Activated CD4-positive, alpha-beta memory T cell treated with anti-CD3 and anti-CD28 coated beads, Interleukin-2, amount 10 ng/mL, durations not matched to agents 7 days and 5 days (primary cell): ENCODE measurements at regions of chr1 and their contacts with region 1.

Region 1: DNA sequence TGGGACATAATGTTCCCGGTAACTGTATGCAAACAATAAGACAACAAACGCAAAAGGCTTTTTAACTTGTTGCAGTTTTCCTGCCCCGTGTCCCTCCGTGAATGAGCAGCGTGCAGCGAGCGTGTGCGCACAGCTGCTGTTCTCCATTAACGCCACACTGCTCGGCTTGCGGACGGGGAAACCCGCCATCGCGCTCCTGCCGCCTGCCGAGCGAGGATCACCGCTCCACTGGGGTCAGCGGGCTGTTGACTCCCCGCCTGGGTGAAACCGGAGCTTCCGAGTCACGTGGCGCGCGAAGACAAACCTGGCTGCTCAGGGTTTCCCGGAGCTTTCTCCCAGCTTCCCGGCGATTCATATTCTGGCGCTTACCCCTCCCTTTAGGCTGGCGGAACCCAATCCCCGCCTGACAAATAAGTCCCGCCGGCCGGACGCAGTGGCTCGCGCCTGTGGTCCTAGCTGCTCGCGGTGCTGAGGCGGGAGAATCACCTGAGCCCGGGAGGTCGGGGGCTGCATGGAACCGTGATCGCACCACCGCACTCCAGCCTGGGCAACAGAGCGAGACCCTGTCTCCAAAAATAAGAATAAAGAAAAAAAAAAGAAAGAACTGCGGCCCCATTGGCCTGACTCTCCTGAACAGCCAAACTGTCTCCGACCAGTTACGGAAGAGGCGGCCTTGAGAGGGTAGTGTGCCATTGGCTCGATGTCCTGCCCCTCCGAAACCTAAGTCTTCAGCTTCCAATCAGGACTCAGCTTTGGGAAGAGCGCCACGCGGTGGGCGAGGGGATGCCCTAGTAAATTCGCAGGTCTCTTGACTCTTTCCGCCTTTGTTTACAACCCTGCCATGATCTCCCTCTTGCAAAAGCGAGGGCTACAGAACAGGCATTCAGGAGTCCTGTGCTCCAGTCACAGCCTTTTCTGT is at the start of gene CREB3L4:
- DNase-seq: peak; percentile 87
- H3K4me3 Mint-ChIP-seq: peak within 1 kb of the TSS; percentile 80
- H3K27ac Mint-ChIP-seq: peak within 1 kb of the TSS; percentile 84
- H3K4me1 Mint-ChIP-seq: peaks cover 63% of the 10 kb centered on the region
- H3K27me3 Mint-ChIP-seq: no peaks in the 10 kb centered on the region
- total RNA-seq, gene CREB3L4: 7.0 to 8.4 TPM

Region 2: DNA sequence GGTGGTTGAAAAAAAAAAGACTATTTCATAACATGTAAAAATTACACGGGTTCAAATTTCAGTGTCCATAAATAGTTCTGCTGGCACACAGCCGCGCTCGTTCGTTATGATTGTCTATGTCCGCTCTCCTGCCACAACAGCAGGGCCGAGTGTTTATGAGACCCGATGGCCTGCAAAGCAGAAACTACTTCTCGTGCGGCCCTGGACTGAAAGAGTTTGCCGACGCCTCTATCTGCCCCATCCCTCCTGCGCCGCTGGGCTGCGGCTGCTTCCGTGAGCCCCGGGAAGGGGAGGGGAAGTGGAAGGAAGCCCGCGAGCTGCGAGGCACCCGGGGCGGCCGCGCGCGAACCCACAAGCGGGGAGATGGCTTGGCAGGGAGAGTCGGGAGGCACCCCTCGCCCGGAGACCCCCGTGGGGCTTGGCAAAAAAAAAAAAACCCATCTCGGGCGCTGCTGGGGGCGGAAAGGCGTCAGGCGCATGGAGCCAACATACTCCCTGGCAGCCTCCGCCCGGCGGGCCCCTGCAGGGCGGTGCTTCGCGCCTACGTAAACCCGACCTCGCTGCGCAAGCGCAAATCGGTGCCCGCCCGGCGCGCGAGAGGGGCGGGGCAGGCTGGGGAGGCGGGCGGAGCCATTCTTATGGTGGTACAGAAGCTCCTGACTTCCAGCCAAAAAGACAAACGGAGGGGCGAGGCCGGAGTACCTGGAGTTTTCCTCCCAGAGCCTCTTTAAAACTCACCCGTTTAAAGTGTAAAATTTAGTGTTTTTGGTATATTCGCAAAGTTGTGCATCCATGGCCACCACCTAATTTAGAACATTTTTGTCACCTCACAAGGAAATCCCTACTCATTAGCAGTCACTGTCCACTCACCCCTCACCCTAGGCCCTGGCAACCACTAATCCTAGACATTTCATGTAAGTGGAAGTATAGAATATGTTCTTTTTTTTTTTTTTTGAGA is 183.8 kb before region 1 on chr1:
- CTCF ChIA-PET with region 1: no interaction called
- POLR2A ChIA-PET with region 1: interaction called, 10 read pairs
- DNase-seq: peak; percentile 93
- H3K4me3 Mint-ChIP-seq: peak overlapping the region; percentile 81
- H3K27ac Mint-ChIP-seq: peak overlapping the region; percentile 89
- H3K4me1 Mint-ChIP-seq: peaks cover 12% of the 10 kb centered on the region
- H3K27me3 Mint-ChIP-seq: peaks cover 15% of the 10 kb centered on the region

Region 3: DNA sequence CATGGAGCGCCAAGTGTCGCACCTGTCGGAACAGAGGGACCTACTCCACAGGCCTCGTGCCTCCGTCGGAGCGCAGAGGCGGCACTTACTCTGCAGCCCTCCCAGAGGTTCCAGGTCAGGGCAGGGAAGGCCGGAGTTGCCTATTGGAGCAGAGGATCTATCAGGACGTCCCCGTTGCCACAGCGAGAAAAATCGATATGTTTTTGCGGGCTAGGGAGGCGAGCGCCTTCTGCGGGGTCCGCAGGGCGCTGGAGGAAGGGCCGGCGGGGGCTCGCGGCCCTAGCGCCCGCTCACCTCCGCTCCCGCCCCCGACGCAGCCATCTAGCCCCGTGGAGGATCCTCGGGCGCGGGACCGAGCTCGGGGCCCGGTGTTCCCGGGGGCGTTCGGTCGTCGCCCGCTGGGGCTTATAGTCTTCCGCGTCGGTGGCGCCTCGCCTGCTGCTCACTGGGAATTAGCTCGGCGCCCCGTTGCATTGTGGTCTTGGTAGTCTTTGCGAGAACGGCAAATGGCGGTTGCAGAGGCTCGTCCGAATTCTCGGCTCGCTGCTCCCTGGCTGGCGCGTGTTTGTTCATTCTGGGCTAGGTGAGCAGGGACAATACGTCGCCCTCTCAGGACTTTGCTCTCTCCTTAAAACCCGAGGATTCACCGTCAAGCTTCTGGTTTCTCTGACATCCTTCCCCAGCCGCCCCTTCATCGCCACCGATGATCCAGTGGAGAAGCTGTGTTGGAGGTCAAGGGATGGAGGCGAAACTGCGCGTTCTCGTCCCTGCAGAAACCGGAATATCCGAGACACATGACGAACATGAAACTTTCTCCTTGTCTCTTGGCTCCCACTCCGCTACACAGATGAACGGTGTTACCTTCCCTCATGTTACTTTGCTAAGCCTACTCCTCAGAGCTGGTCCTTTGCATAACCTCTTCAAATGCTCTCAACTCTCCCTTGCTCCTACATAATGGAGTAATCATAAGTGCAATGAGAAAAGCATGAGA is 10.2 kb after region 1 on chr1 and contains the start of gene JTB:
- CTCF ChIA-PET with region 1: interaction called, 48 read pairs
- POLR2A ChIA-PET with region 1: interaction called, 118 read pairs
- DNase-seq: peak; percentile 89
- H3K4me3 Mint-ChIP-seq: peak within 1 kb of the TSS; percentile 97
- H3K27ac Mint-ChIP-seq: peak within 1 kb of the TSS; percentile 89
- H3K4me1 Mint-ChIP-seq: peaks cover 49% of the 10 kb centered on the region
- H3K27me3 Mint-ChIP-seq: no peaks in the 10 kb centered on the region
- total RNA-seq, gene JTB: 120 to 127 TPM

Region 4: DNA sequence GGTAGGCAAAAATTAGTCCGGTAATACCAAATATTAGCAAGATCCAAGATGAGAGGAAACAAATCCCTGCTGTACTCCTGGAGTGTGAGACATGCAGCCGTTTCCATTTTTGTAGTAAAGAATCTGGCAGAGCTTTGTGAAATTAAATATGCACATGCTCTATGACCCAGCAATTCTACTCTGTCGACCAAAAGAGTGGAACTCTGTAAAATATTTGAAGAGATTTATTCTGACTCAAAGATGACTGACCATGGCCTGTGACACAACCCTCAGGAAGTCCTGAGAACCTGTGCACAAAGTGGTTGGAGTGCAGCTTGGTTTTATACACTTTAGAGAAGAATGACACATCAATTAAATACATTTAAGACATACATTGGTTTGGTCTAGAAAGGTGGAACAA is 321.3 kb after region 1 on chr1:
- CTCF ChIA-PET with region 1: no interaction called
- POLR2A ChIA-PET with region 1: no interaction called
- DNase-seq: no peak
- H3K4me3 Mint-ChIP-seq: no peak overlapping the region
- H3K27ac Mint-ChIP-seq: no peak overlapping the region
- H3K4me1 Mint-ChIP-seq: no peaks in the 10 kb centered on the region
- H3K27me3 Mint-ChIP-seq: peaks cover 11% of the 10 kb centered on the region